Activated CD4-positive, alpha-beta memory T cell treated with anti-CD3 and anti-CD28 coated beads for 36 hours (primary cell): ENCODE measurements at regions of chr11 and their contacts with region 1.

Region 1: DNA sequence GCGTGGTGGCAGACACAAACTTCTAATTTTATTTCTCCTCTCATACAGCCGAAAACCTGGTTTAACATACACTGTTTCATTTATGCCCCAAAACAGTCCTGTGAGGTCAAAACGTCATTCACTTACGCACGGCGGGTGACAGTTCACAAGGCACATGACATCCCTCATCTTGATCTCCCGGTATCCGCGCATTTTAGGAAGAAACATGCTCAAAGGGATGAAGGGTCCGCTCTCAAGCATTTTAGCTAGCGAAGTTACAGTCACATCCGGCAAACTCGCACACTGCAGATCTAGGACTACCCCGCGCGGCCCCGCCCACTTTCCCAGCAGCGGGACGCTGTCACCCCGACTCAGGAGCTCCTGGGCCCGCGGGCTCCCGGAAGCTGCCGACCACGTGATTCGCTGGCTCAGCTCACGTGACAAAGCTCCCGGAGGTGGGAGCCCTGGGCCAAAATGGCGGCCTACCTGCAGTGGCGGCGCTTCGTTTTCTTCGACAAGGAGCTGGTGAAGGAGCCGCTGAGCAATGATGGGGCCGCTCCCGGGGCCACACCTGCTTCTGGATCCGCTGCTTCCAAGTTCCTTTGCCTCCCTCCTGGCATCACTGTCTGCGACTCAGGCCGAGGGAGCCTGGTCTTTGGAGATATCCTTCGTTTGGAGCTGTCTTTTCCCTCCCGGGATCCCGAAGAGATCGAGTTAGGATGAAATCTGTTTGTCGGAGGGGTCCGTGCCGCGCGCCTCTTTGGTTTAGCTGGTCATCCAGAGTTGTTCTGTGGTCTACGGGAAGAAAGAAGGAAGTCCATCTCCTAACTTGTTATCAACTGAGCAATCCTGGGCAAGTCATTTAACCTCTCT is at the start of gene VPS11:
- DNase-seq: peak; percentile 99
- H3K4me3 Mint-ChIP-seq: peak within 1 kb of the TSS; percentile 96
- H3K27ac Mint-ChIP-seq: peak within 1 kb of the TSS; percentile 97
- H3K4me1 Mint-ChIP-seq: peaks cover 38% of the 10 kb centered on the region
- H3K27me3 Mint-ChIP-seq: no peaks in the 10 kb centered on the region
- total RNA-seq, gene VPS11: 19.2 to 21.1 TPM

Region 2: DNA sequence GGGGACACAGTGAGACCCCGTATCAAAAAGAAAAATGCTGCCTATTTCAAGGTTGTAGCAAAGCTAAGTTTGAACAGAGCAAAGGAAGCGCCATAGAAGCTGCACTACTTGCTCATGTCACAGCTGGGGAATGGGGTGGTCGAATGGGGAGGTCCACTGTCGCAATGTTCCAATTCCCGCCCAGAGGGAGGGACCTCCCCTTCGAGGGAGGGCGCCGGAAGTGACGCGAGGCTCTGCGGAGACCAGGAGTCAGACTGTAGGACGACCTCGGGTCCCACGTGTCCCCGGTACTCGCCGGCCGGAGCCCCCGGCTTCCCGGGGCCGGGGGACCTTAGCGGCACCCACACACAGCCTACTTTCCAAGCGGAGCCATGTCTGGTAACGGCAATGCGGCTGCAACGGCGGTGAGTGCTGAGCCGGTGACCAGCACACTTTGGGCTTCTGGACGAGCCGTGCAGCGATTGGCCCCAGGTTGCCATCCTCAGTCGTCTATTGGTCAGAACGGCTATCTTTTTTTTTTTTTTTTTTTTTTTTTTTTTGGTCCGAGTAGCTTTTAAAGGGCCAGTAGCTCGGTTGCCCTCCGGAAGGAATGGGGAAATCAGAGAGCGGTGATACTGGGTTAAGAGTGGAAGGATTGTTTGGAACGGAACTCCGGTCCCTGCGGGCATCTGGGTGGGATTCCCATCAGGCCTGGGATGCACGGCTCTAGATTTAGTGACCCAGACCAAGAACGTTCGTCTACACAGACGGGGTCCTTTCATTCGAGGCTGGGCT is 17.3 kb after region 1 on chr11 and contains the start of gene HMBS:
- CTCF ChIA-PET with region 1: interaction called, 10 read pairs
- POLR2A ChIA-PET with region 1: interaction called, 19 read pairs
- intact Hi-C with region 1: loop called (anchors 1 kb)
- DNase-seq: peak; percentile 93
- H3K4me3 Mint-ChIP-seq: peak within 1 kb of the TSS; percentile 98
- H3K27ac Mint-ChIP-seq: peak within 1 kb of the TSS; percentile 95
- H3K4me1 Mint-ChIP-seq: peaks cover 21% of the 10 kb centered on the region
- H3K27me3 Mint-ChIP-seq: no peaks in the 10 kb centered on the region
- total RNA-seq, gene HMBS: 31.2 to 33.8 TPM

Region 3: GRCh38 chr11:119196833-119197483 is 129.4 kb after region 1 on chr11:
- CTCF ChIA-PET with region 1: interaction called, 10 read pairs
- POLR2A ChIA-PET with region 1: no interaction called
- intact Hi-C with region 1: loop called (anchors 1 kb)
- DNase-seq: peak; percentile 72
- H3K4me3 Mint-ChIP-seq: no peak overlapping the region
- H3K27ac Mint-ChIP-seq: no peak overlapping the region
- H3K4me1 Mint-ChIP-seq: peaks cover 3% of the 10 kb centered on the region
- H3K27me3 Mint-ChIP-seq: no peaks in the 10 kb centered on the region